WTC11 (cell line): ENCODE measurements at regions of chr16 and their contacts with region 1.

Region 1: GRCh38 chr16:80466024-80466987 is 74.5 kb upstream of the DYNLRB2 start:
- DNase-seq: peak; percentile 88
- ATAC-seq: peak; percentile 93
- H3K4me3 Mint-ChIP-seq: peak overlapping the region; percentile 49
- H3K27ac Mint-ChIP-seq: peak overlapping the region; percentile 14
- H3K4me1 Mint-ChIP-seq: peaks cover 25% of the 10 kb centered on the region
- H3K27me3 Mint-ChIP-seq: peaks cover 13% of the 10 kb centered on the region
- CTCF ChIP-seq: peak; percentile 95

Region 2: GRCh38 chr16:80277182-80277581 is 189.1 kb before region 1 on chr16:
- CTCF ChIA-PET with region 1: interaction called, 15 read pairs
- POLR2A ChIA-PET with region 1: no interaction called
- DNase-seq: peak; percentile 63
- ATAC-seq: peak; percentile 100
- H3K4me3 Mint-ChIP-seq: no peak overlapping the region
- H3K27ac Mint-ChIP-seq: no peak overlapping the region
- H3K4me1 Mint-ChIP-seq: no peaks in the 10 kb centered on the region
- H3K27me3 Mint-ChIP-seq: no peaks in the 10 kb centered on the region; the same call in 1 of the 2 replicates
- CTCF ChIP-seq: no peak

Region 3: DNA sequence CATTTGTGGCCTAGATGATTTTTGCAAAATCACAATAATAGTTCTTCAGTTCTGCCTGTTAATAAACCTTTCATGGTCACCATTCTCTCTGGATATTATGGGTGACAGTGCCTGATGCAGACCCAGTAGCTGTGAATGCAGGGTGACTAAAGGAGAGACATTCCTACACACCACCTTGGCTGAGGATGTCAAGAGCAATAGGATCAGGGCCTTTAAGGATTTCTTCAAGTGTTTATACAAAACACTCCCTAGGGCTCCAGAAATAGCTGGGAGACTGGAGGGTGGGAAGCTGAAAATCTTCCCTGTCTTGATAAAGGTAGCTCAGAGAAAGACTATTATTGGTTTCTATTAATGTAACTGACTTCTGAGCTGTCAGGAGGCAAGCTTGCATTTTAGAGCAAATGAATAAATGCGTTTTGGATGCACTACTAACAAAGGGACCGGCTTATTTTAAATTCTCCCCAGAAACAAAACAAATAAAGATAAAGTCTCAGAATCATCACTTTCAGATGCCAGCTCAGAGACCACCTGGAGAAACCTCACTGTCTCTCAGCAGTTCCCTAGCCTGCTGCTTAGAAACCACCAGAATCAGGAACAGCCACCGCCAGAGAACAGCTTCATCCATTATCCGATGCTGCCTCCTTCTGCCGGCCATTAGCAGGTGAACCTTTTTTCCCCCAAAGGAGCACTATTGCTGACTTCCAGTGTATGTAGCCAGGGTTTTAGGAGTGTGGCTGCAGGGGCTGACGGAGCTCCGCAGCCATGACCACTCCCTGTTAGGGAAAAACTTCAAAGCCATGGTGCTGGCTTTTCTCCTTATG is 97.0 kb before region 1 on chr16:
- CTCF ChIA-PET with region 1: interaction called, 10 read pairs
- POLR2A ChIA-PET with region 1: no interaction called
- DNase-seq: peak; percentile 45
- ATAC-seq: peak; percentile 97
- H3K4me3 Mint-ChIP-seq: no peak overlapping the region
- H3K27ac Mint-ChIP-seq: no peak overlapping the region
- H3K4me1 Mint-ChIP-seq: peaks cover 6% of the 10 kb centered on the region; the same call in 1 of the 2 replicates
- H3K27me3 Mint-ChIP-seq: no peaks in the 10 kb centered on the region
- CTCF ChIP-seq: no peak

Region 4: GRCh38 chr16:80417706-80418271 is 48.5 kb before region 1 on chr16:
- CTCF ChIA-PET with region 1: no interaction called
- POLR2A ChIA-PET with region 1: no interaction called
- DNase-seq: no peak
- ATAC-seq: no peak
- H3K4me3 Mint-ChIP-seq: no peak overlapping the region
- H3K27ac Mint-ChIP-seq: no peak overlapping the region
- H3K4me1 Mint-ChIP-seq: no peaks in the 10 kb centered on the region
- H3K27me3 Mint-ChIP-seq: no peaks in the 10 kb centered on the region; the same call in 1 of the 2 replicates
- CTCF ChIP-seq: no peak

Region 5: GRCh38 chr16:80437707-80438106 is 28.6 kb before region 1 on chr16:
- CTCF ChIA-PET with region 1: interaction called, 27 read pairs
- POLR2A ChIA-PET with region 1: no interaction called
- DNase-seq: peak; percentile 35
- ATAC-seq: peak; percentile 98
- H3K4me3 Mint-ChIP-seq: no peak overlapping the region
- H3K27ac Mint-ChIP-seq: no peak overlapping the region
- H3K4me1 Mint-ChIP-seq: peaks cover 5% of the 10 kb centered on the region
- H3K27me3 Mint-ChIP-seq: no peaks in the 10 kb centered on the region; the same call in none of the 2 replicates
- CTCF ChIP-seq: no peak

Region 6: GRCh38 chr16:80480664-80481063 is 14.4 kb after region 1 on chr16:
- CTCF ChIA-PET with region 1: interaction called, 11 read pairs
- POLR2A ChIA-PET with region 1: no interaction called
- DNase-seq: no peak
- ATAC-seq: no peak
- H3K4me3 Mint-ChIP-seq: no peak overlapping the region
- H3K27ac Mint-ChIP-seq: no peak overlapping the region
- H3K4me1 Mint-ChIP-seq: no peaks in the 10 kb centered on the region
- H3K27me3 Mint-ChIP-seq: no peaks in the 10 kb centered on the region; the same call in 1 of the 2 replicates
- CTCF ChIP-seq: no peak

Region 7: GRCh38 chr16:80499960-80500515 is 33.7 kb after region 1 on chr16:
- CTCF ChIA-PET with region 1: no interaction called
- POLR2A ChIA-PET with region 1: no interaction called
- DNase-seq: no peak
- ATAC-seq: no peak
- H3K4me3 Mint-ChIP-seq: no peak overlapping the region
- H3K27ac Mint-ChIP-seq: no peak overlapping the region
- H3K4me1 Mint-ChIP-seq: peaks cover 16% of the 10 kb centered on the region
- H3K27me3 Mint-ChIP-seq: no peaks in the 10 kb centered on the region
- CTCF ChIP-seq: no peak

Region 8: GRCh38 chr16:80526425-80527061 is 60.2 kb after region 1 on chr16:
- CTCF ChIA-PET with region 1: interaction called, 15 read pairs
- POLR2A ChIA-PET with region 1: no interaction called
- DNase-seq: peak; percentile 50
- ATAC-seq: peak; percentile 85
- H3K4me3 Mint-ChIP-seq: 0 out of 2 replicates have a peak overlapping the region, but pooled peaks have one; percentile 24
- H3K27ac Mint-ChIP-seq: no peak overlapping the region
- H3K4me1 Mint-ChIP-seq: peaks cover 7% of the 10 kb centered on the region; the same call in 1 of the 2 replicates
- H3K27me3 Mint-ChIP-seq: no peaks in the 10 kb centered on the region; the same call in 1 of the 2 replicates
- CTCF ChIP-seq: peak; percentile 65